Caco-2 (cell line): ENCODE measurements at regions of chr6 and their contacts with region 1.

Region 1: DNA sequence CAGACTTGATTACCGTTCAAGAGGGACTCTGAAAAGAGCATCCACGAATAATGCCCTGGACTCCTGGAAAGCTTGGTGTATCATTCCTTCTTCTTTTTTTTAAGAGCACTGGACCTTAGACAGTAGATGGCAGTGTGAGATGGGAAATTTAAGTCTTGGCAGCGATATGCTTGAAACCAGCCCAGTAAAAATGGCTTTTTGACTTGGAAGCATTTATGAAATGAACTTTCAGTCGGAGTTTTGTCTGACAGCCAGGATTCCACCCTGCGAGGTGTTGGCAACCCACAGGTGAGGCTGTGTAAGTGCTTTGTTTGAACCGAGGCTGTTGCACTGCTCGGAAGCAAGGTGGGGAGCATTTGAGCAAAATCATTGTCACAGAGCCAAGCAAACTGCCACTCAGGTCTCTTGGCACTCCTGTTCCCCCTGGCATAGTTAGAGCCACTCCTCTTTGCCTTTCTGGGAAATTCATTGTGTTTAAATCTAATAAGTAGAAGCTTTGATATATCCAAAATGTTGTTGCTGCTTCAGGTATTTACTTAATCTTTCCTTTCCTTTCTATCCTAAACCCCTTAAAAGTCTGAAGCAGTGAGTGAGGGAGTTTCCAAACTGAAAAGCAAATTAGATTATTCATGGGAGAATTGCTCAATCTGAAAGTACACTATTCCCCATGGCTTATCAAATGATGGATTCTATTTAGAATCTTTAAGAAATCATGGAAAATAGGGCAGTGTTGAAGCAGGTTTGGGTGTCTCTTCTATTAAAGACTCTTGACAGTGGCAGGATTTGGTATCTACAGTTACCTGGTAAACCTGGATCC is 272.8 kb upstream of the SLC35B3 start:
- DNase-seq: peak in 1 of 2 experiments; percentile 53
- H3K4me3 ChIP-seq: no peak overlapping the region
- H3K4me3 Mint-ChIP-seq: peak overlapping the region; percentile 33
- H3K27ac Mint-ChIP-seq: peak overlapping the region; percentile 25
- H3K4me1 ChIP-seq: no peaks in the 10 kb centered on the region
- H3K4me1 Mint-ChIP-seq: peaks cover 10% of the 10 kb centered on the region
- H3K27me3 ChIP-seq: no peaks in the 10 kb centered on the region
- H3K27me3 Mint-ChIP-seq: no peaks in the 10 kb centered on the region
- CTCF ChIP-seq: peak; percentile 50 to 51

Region 2: GRCh38 chr6:8047541-8048292 is 660.4 kb before region 1 on chr6:
- CTCF ChIA-PET with region 1: no interaction called
- POLR2A ChIA-PET with region 1: no interaction called
- intact Hi-C with region 1: no loop called
- DNase-seq: no peak
- H3K4me3 ChIP-seq: no peak overlapping the region
- H3K4me3 Mint-ChIP-seq: no peak overlapping the region
- H3K27ac Mint-ChIP-seq: no peak overlapping the region
- H3K4me1 ChIP-seq: no peaks in the 10 kb centered on the region
- H3K4me1 Mint-ChIP-seq: no peaks in the 10 kb centered on the region
- H3K27me3 ChIP-seq: no peaks in the 10 kb centered on the region
- H3K27me3 Mint-ChIP-seq: no peaks in the 10 kb centered on the region
- CTCF ChIP-seq: no peak

Region 3: DNA sequence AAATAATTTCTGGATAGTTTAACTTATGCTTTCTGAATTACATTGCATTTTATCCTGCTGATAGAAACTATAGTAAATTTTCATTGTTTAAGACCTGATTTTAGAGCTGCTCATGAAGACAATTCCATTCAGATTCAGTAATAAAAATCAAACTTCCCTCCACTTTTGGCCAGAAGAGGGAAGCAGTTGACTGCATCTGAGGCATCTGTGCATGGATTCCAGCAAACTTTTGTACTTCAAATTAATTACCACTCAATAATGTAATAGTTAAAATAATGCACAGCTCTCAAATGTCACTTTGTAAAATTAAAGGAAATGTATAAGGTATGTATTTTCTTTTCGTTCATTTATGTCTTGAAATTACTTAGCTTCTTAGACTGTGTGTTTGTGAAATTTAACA is 208.6 kb before region 1 on chr6:
- CTCF ChIA-PET with region 1: no interaction called
- POLR2A ChIA-PET with region 1: no interaction called
- intact Hi-C with region 1: loop called (anchors 5 kb)
- DNase-seq: peak in 1 of 2 experiments; percentile 41
- H3K4me3 ChIP-seq: no peak overlapping the region
- H3K4me3 Mint-ChIP-seq: no peak overlapping the region
- H3K27ac Mint-ChIP-seq: no peak overlapping the region
- H3K4me1 ChIP-seq: peaks cover 5% of the 10 kb centered on the region; the same call in 1 of the 2 replicates
- H3K4me1 Mint-ChIP-seq: peaks cover 2% of the 10 kb centered on the region
- H3K27me3 ChIP-seq: no peaks in the 10 kb centered on the region
- H3K27me3 Mint-ChIP-seq: no peaks in the 10 kb centered on the region
- CTCF ChIP-seq: peak; percentile 61 to 62

Region 4: DNA sequence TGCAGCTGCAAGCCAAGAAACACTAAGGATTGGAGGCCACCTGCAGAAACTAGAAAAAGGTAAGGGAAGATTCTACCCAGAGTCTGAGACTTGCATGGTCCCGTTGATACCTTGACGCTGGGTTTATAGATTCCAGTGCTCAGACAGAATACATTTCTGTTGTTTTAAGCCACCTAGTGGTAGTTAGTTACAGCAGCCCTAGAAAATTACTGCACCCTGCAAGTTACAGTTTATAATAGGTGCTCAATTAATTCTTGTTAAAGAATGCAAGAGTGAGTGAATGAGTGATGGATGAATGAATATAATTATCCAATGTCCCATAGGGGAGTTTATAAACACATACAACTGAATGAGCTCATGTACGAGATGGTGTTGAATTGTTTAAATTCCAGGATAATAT is 180.3 kb after region 1 on chr6:
- CTCF ChIA-PET with region 1: no interaction called
- POLR2A ChIA-PET with region 1: no interaction called
- intact Hi-C with region 1: loop called (anchors 2 kb)
- DNase-seq: peak in 1 of 2 experiments; percentile 5
- H3K4me3 ChIP-seq: no peak overlapping the region
- H3K4me3 Mint-ChIP-seq: no peak overlapping the region
- H3K27ac Mint-ChIP-seq: no peak overlapping the region
- H3K4me1 ChIP-seq: peaks cover 13% of the 10 kb centered on the region
- H3K4me1 Mint-ChIP-seq: peaks cover 15% of the 10 kb centered on the region
- H3K27me3 ChIP-seq: no peaks in the 10 kb centered on the region
- H3K27me3 Mint-ChIP-seq: no peaks in the 10 kb centered on the region
- CTCF ChIP-seq: peak; percentile 21 to 31